Mammary epithelial cell (primary cell): ENCODE measurements at regions of chr1 and their contacts with region 1.

Region 1: GRCh38 chr1:111334169-111334568 is 43.5 kb downstream of the CHIA start:
- DNase-seq: peak; percentile 43
- H3K4me3 ChIP-seq: no peak overlapping the region
- H3K27ac ChIP-seq: no peak overlapping the region
- H3K4me1 ChIP-seq: no peaks in the 10 kb centered on the region
- H3K27me3 ChIP-seq: no peaks in the 10 kb centered on the region
- CTCF ChIP-seq: peak; percentile 80 to 83

Region 2: GRCh38 chr1:111030590-111030989 is 303.6 kb before region 1 on chr1:
- CTCF ChIA-PET with region 1: no interaction called
- dilution Hi-C with region 1: no loop called
- in situ Hi-C with region 1: loop called in 1 of 2 experiments (anchors 25 kb)
- intact Hi-C with region 1: loop called (anchors 1 kb)
- DNase-seq: peak; percentile 49
- H3K4me3 ChIP-seq: no peak overlapping the region
- H3K27ac ChIP-seq: no peak overlapping the region
- H3K4me1 ChIP-seq: no peaks in the 10 kb centered on the region
- H3K27me3 ChIP-seq: no peaks in the 10 kb centered on the region
- CTCF ChIP-seq: peak; percentile 87 to 91

Region 3: DNA sequence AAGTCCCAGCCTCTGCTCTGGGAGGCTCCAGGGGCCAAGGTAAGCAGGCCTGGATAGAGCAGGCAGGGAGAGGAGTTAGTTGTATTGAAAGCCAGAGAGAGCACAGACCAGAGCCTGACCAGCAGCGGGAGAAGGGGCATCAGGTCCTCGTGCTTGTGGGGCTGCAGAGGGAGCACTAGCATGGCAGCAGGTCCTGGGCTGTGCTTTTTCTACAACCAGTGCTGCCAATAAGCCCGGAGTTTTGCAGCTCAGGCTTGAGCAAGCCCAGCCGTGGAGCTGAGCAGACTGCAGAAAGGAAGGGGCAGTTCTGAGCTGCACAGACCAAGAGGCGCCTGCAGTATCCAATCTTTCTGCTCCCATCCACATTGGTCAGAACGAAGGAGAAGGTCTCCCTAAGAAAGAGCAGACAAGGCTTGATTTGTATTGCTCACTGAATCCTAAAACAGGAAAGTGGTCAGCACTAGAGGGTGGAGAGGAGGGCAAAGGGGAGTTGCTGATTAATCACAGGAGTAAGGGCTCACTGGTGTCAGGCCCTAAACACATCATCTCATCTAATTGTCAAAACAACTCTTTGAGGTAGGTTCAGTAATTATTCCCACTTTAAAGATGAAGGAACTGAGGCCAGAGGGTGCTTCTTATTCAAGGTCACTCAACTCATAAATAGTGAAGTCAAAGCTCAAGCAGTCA is 136.4 kb before region 1 on chr1:
- CTCF ChIA-PET with region 1: no interaction called
- dilution Hi-C with region 1: no loop called
- in situ Hi-C with region 1: no loop called
- intact Hi-C with region 1: loop called (anchors 1 kb)
- DNase-seq: no peak
- H3K4me3 ChIP-seq: no peak overlapping the region
- H3K27ac ChIP-seq: no peak overlapping the region
- H3K4me1 ChIP-seq: peaks cover 29% of the 10 kb centered on the region
- H3K27me3 ChIP-seq: no peaks in the 10 kb centered on the region
- CTCF ChIP-seq: peak; percentile 43 to 44

Region 4: DNA sequence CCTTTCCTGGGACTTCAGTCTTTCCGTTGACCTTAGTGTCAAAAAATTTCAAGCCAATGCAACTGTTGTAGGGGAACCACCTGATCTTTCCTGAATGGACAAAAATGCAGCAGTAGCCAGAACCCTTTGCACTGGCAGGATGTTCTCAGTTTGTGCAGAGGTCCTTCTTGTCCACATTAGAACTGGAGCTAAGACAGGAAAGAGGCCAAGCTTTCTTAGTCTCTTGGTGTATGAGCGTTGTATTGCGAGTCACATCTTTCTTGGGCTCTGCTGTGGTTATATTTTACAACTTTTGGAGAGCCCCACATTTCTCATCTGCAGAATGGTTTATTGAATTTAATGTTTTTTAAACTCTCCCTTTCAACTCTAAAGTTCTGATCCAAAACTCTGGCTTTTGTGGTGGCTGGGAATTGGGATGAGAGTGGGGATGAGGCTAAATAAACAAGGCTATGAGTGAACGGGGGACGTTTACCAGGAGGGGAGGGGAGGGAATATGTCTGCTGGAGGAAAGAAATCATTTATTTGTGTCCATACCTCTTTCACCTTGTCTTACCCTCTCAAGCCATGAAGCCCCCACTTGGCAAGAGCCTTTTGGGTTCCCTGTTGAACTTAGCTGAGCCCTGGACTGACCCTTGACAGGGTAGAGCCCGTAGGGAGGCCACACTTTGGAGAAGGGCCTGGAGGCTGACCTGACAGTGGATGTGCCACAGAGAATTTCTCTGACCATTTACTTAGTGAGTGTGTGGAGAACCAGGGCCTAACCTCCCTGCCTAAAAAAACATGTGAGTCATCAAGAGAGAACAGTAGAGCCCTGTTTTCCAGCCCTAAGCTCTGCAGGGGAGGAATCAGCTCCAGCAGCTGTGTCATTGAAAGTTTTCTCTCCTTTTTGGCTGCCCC is 106.1 kb before region 1 on chr1:
- CTCF ChIA-PET with region 1: interaction called, 4 read pairs
- dilution Hi-C with region 1: loop called (anchors 5 kb)
- in situ Hi-C with region 1: loop called (anchors 5 kb)
- intact Hi-C with region 1: loop called (anchors 1 kb)
- DNase-seq: peak; percentile 87
- H3K4me3 ChIP-seq: no peak overlapping the region
- H3K27ac ChIP-seq: peak overlapping the region; percentile 33
- H3K4me1 ChIP-seq: peaks cover 27% of the 10 kb centered on the region
- H3K27me3 ChIP-seq: no peaks in the 10 kb centered on the region
- CTCF ChIP-seq: no peak

Region 5: GRCh38 chr1:111366256-111366655 is 32.1 kb after region 1 on chr1:
- CTCF ChIA-PET with region 1: no interaction called
- dilution Hi-C with region 1: no loop called
- in situ Hi-C with region 1: no loop called
- intact Hi-C with region 1: no loop called
- DNase-seq: peak; percentile 39
- H3K4me3 ChIP-seq: no peak overlapping the region
- H3K27ac ChIP-seq: no peak overlapping the region
- H3K4me1 ChIP-seq: peaks cover 13% of the 10 kb centered on the region
- H3K27me3 ChIP-seq: no peaks in the 10 kb centered on the region
- CTCF ChIP-seq: no peak

Region 6: GRCh38 chr1:111378791-111379190 is 44.6 kb after region 1 on chr1:
- CTCF ChIA-PET with region 1: no interaction called
- dilution Hi-C with region 1: no loop called
- in situ Hi-C with region 1: no loop called
- intact Hi-C with region 1: no loop called
- DNase-seq: no peak
- H3K4me3 ChIP-seq: no peak overlapping the region
- H3K27ac ChIP-seq: no peak overlapping the region
- H3K4me1 ChIP-seq: no peaks in the 10 kb centered on the region
- H3K27me3 ChIP-seq: peaks cover 5% of the 10 kb centered on the region
- CTCF ChIP-seq: no peak

Region 7: GRCh38 chr1:111399792-111400610 is 65.8 kb after region 1 on chr1:
- CTCF ChIA-PET with region 1: no interaction called
- dilution Hi-C with region 1: no loop called
- in situ Hi-C with region 1: no loop called
- intact Hi-C with region 1: loop called (anchors 1 kb)
- DNase-seq: peak; percentile 23
- H3K4me3 ChIP-seq: no peak overlapping the region
- H3K27ac ChIP-seq: no peak overlapping the region
- H3K4me1 ChIP-seq: no peaks in the 10 kb centered on the region
- H3K27me3 ChIP-seq: no peaks in the 10 kb centered on the region
- CTCF ChIP-seq: peak; percentile 42 to 70